Activated T-helper 1 cell treated with anti-CD3 and anti-CD28 coated beads, Interleukin-12 subunit alpha, Interleukin-12 subunit beta, Interleukin-2, Interleukin-4 antibody, amounts not matched to agents 30 ng/mL and 10 ng/mL and 1 ng/mL, durations not matched to agents 14 hours and 24 hours and 36 hours (primary cell): ENCODE measurements at regions of chr12 and their contacts with region 1.

Region 1: GRCh38 chr12:3777206-3777809 is 24.4 kb upstream of the CRACR2A start:
- DNase-seq: no peak
- H3K4me3 Mint-ChIP-seq: no peak overlapping the region
- H3K27ac Mint-ChIP-seq: no peak overlapping the region
- H3K4me1 Mint-ChIP-seq: peaks cover 5% of the 10 kb centered on the region
- H3K27me3 Mint-ChIP-seq: no peaks in the 10 kb centered on the region

Region 2: DNA sequence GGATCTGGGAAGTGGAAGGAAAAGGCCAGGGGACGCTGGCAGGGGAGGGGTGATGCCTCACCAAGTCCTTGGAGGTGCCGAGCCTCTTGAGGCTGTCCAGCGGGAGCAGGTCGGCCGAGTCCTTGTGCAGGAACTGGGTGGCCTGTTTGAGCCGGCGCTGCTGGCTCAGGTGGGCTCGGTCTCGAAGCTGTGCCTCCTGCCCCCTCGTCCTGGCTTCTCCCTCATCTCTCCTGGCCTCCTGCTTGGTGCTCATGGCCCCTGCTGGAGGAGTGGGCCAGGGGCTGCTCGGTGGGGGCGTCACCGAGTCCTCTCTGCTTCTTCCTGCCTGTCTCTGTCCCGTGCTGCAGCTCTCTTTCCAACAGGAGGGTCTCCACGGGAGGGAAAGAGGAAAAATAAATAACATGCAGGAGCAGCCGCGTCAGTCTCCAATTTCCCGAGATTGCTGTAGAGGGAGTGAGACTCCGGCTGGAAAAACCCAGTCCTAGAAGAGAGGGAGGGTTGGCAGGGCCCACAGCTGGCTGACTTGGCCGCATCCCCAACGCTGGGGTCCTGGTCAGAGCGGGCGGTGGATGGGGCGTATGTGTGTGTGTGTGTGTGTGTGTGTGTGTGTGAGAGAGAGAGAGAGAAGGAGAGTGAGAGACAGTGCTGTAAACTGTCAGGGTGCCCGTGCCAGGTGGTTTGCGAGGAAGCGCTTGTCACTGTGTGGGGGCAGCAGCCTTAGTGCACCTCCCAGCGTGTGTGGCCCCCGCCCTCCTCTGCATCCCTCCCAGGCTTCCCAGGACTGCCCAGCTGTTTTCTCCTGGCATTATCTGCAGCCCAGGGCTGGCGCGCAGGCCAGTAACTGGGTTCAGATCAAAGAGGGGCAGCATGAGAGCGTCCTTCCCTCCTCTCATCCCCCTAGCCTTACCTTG is 942.5 kb before region 1 on chr12 and contains the start of gene NRIP2:
- intact Hi-C with region 1: no loop called
- DNase-seq: no peak
- H3K4me3 Mint-ChIP-seq: no peak within 1 kb of the TSS
- H3K27ac Mint-ChIP-seq: no peak within 1 kb of the TSS
- H3K4me1 Mint-ChIP-seq: no peaks in the 10 kb centered on the region
- H3K27me3 Mint-ChIP-seq: peaks cover 2% of the 10 kb centered on the region
- total RNA-seq, gene NRIP2: not detected in 2 replicates

Region 3: DNA sequence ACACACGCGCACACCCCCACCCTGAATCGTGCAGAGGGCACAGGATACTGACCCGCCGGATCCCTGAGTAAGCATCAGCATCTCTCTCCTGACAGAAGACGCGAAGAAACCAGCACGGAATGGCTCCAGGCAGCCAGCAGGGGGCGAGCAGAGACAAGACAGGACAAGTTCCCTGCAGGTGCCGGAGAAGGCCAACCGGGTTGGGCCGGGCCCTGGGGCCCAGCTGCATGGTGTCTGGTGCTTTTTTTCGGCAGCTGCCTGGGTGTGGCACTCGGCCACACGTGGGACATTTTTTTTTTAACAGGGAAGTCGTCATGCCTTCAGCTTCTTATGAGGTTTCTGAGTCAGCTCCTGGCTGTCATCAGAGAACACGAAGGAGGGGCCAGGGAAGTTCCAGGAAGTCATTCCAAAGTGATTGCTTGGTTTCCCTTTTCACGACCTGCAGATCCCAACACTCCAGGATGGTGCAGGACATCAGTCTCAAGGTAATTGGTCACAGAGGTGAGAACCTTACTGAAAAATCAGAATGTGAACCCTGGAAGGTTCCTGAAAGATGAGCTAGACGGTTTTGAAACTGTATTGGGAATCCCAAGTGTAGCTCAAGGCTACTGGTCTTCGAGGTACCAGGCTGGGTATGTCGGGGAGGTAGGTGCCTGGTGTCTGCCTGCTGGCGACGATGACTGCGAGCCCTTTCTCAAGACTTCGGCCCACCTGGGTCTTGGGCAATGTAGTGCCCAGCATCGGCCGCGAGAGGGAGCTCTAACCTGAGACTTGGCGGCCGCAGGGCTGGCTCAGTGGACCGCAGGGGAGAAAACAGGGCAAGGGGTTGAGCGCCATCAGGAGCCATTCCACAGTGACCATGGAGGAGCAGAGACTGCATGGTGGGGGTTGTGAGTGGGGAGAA is 477.1 kb before region 1 on chr12:
- intact Hi-C with region 1: loop called (anchors 1 kb)
- DNase-seq: peak; percentile 72
- H3K4me3 Mint-ChIP-seq: peak overlapping the region; percentile 38
- H3K27ac Mint-ChIP-seq: peak overlapping the region; percentile 74
- H3K4me1 Mint-ChIP-seq: peaks cover 14% of the 10 kb centered on the region
- H3K27me3 Mint-ChIP-seq: peaks cover 12% of the 10 kb centered on the region

Region 4: DNA sequence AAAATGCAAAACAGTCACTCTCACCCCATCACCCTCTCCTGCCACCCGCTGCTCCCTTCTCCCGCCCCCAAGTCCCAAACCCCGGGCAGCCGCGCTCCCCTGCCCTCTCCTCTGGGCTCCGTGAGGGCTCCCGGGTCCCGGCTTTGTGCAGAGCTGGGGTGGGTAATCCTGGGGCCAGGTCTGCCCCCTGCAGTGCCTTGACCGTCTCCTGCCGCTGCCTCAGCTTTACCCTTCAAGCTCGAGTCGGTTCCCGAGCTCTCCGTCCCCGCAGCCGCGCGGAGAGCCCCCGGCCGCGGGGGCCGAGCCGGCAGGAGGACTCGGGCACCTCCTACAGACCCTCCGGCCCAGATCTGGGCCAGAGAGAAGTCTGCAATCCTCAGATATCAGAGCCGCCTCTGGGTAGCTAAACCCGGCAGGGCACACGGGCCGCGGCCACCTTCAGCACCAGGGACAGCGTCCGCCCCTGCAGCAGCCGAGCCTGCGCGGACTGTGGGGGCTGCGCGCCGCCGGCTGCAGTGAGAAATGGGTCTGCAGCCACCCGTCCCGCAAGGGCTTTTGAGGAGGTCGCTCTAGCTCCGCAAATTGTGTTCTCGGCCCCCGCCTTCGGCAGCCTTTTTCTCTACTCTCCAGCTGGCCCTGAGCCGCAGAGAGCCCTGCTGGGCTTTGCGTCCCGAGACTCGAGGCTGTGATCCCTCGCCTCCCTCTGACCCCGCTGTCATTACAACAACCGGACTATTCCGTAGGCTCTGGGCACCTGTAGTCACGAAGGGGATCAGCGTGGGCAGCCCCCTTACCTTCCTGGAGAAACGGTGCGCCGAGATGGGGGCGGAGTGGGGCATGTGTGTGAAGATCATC is 285.1 kb before region 1 on chr12:
- intact Hi-C with region 1: loop called (anchors 10 kb)
- DNase-seq: peak; percentile 21
- H3K4me3 Mint-ChIP-seq: no peak overlapping the region
- H3K27ac Mint-ChIP-seq: no peak overlapping the region
- H3K4me1 Mint-ChIP-seq: no peaks in the 10 kb centered on the region
- H3K27me3 Mint-ChIP-seq: peaks cover 64% of the 10 kb centered on the region

Region 5: GRCh38 chr12:3658327-3659163 is 118.8 kb before region 1 on chr12:
- intact Hi-C with region 1: loop called (anchors 1 kb)
- DNase-seq: no peak
- H3K4me3 Mint-ChIP-seq: no peak overlapping the region
- H3K27ac Mint-ChIP-seq: peak overlapping the region; percentile 13
- H3K4me1 Mint-ChIP-seq: no peaks in the 10 kb centered on the region
- H3K27me3 Mint-ChIP-seq: no peaks in the 10 kb centered on the region

Region 6: GRCh38 chr12:3872800-3873636 is 95.7 kb after region 1 on chr12 and contains the start of gene PARP11:
- intact Hi-C with region 1: no loop called
- DNase-seq: peak; percentile 96
- H3K4me3 Mint-ChIP-seq: peak within 1 kb of the TSS; percentile 98
- H3K27ac Mint-ChIP-seq: peak within 1 kb of the TSS; percentile 99
- H3K4me1 Mint-ChIP-seq: peaks cover 52% of the 10 kb centered on the region
- H3K27me3 Mint-ChIP-seq: no peaks in the 10 kb centered on the region
- total RNA-seq, gene PARP11: 13.2 and 13.9 TPM in 2 replicates